Posterior cingulate gyrus (tissue), 11 donors: ENCODE measurements at regions of chr2 and their contacts with region 1.

Region 1: DNA sequence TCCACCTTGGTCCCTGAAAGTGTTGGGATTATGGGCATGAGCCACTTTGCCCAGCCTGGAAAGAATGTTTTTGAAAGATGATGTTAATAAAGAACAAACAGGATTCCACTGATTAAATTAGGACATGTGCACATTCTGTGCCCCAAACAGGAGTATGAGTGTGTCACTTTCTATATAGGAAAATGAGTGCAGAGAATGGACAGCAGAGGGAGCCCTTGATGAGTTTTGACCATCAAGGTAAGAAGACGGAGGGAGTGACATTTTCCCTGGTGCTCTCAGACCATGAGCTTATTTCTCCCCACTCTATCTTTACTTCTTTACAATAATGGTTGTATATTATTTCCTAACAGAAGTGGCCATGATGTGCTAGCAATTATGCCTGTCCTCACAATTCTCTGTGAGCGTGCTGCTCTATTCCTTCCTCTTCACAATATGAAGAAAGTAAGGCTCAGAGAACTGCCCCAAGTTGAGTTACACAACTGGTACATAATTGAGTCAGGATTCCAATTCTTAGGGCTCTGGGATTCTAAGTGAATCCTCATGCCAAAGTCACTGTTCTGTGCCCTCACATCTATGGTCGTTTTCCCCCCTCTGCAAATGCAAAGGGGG is 20.6 kb downstream of the RPL37A start:
- DNase-seq: peak in 4 of 10 donors; percentile 26 to 59 (median 43)

Region 2: GRCh38 chr2:216242365-216242764 is 276.9 kb before region 1 on chr2:
- intact Hi-C with region 1: no loop called
- DNase-seq: peak in 8 of 10 donors; percentile 17 to 87 (median 45)

Region 3: DNA sequence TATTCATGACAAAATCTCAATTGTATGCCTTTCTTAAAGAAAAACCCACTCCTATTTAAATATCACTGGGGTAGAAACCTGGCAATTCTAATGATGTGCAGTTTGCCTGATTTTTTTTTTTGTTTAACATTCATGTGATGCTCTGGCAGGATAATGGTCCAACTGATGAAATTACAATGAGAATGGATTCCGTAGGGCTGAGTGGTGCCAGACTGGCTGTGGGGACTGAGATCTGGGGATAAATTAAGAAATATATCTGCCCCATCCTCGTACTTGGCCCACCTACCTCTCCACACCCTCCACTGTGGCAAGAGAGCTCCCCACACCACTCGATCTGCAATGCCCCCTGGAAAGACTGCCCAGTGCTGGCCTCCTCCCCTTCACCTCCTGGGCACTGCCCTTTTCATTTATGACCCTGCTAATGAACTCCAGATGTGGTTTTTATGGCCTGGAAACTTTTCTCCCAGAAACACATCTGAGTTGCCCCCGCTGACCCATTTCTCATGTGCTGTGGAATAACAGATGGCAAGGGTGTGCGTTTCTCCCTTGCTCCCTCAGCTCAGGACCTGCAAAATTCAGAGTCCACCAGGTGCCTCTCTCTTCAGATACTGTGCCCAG is 53.6 kb before region 1 on chr2:
- intact Hi-C with region 1: no loop called
- DNase-seq: no peak

Region 4: GRCh38 chr2:216666461-216667233 is 147.4 kb after region 1 on chr2:
- intact Hi-C with region 1: loop called (anchors 1 kb)
- DNase-seq: peak; percentile 58 to 96 (median 79)